Activated CD8-positive, alpha-beta T cell treated with anti-CD3 and anti-CD28 coated beads, Interleukin-2, amount 10 ng/mL, durations not matched to agents 7 days and 5 days (primary cell): ENCODE measurements at regions of chr5 and their contacts with region 1.

Region 1: GRCh38 chr5:151651997-151652645 is 34.6 kb downstream of the SPARC start:
- DNase-seq: peak; percentile 77
- ATAC-seq: peak; percentile 96
- H3K4me3 Mint-ChIP-seq: no peak overlapping the region
- H3K27ac Mint-ChIP-seq: no peak overlapping the region
- H3K4me1 Mint-ChIP-seq: no peaks in the 10 kb centered on the region
- H3K27me3 Mint-ChIP-seq: peaks cover 8% of the 10 kb centered on the region

Region 2: GRCh38 chr5:151523335-151523734 is 128.8 kb before region 1 on chr5:
- CTCF ChIA-PET with region 1: interaction called, 25 read pairs
- POLR2A ChIA-PET with region 1: no interaction called
- DNase-seq: peak; percentile 55
- ATAC-seq: peak; percentile 88
- H3K4me3 Mint-ChIP-seq: no peak overlapping the region
- H3K27ac Mint-ChIP-seq: no peak overlapping the region
- H3K4me1 Mint-ChIP-seq: no peaks in the 10 kb centered on the region
- H3K27me3 Mint-ChIP-seq: no peaks in the 10 kb centered on the region

Region 3: GRCh38 chr5:151637676-151638075 is 14.4 kb before region 1 on chr5:
- CTCF ChIA-PET with region 1: interaction called, 16 read pairs
- POLR2A ChIA-PET with region 1: no interaction called
- DNase-seq: no peak
- ATAC-seq: no peak
- H3K4me3 Mint-ChIP-seq: no peak overlapping the region
- H3K27ac Mint-ChIP-seq: no peak overlapping the region
- H3K4me1 Mint-ChIP-seq: peaks cover 8% of the 10 kb centered on the region
- H3K27me3 Mint-ChIP-seq: peaks cover 20% of the 10 kb centered on the region

Region 4: DNA sequence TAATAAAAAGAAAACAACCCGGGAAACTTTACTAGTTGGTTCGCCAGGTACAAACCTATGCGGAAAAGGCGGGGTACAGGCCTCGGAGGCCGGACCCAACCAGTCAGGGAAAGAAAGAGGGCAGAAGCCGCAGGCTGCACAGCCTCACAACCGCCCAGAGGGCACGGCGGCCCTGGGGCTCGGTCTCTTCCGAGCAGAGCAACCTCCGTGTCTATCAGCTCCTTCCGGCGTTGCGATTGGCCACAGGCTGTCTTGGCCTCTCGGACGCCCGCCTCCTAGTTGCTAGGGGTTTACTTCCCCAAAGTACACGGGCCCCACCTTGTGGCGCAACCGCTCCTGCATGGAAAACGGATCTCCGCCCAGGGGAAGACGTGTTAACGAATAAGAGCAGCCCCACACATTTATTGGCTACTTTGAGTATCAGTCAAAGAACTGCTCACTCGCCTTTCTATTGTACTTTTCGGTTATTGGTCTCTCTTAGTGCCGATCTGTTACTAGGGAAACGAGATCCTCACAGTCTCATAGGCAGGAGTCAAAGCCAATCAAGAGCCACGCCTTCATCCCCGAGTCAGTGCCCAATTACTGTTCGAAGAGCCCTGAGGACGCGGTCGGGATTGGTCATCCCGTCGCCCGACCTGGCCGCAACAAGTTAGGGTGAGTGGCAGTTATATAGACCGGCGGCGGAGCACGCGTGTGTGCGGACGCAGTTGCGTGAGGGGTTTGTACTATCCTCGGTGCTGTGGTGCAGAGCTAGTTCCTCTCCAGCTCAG is 119.3 kb after region 1 on chr5 and contains the start of gene G3BP1:
- CTCF ChIA-PET with region 1: interaction called, 41 read pairs
- POLR2A ChIA-PET with region 1: interaction called, 3 read pairs
- DNase-seq: peak; percentile 100
- ATAC-seq: peak; percentile 84
- H3K4me3 Mint-ChIP-seq: peak within 1 kb of the TSS; percentile 87
- H3K27ac Mint-ChIP-seq: peak within 1 kb of the TSS; percentile 81
- H3K4me1 Mint-ChIP-seq: peaks cover 33% of the 10 kb centered on the region
- H3K27me3 Mint-ChIP-seq: no peaks in the 10 kb centered on the region
- total RNA-seq, gene G3BP1: 193 to 213 TPM